Spleen (tissue), 13 donors: ENCODE measurements at regions of chr7 and their contacts with region 1.

Region 1: GRCh38 chr7:44240983-44241510 is 40.3 kb downstream of the YKT6 start:
- DNase-seq: peak; percentile 84
- H3K4me3 ChIP-seq: peak overlapping the region in 1 of 8 donors; percentile 50
- H3K27ac ChIP-seq: no peak overlapping the region
- H3K4me1 ChIP-seq: peaks cover 0 to 11% (median 7%) of the 10 kb centered on the region in 6 donors
- H3K27me3 ChIP-seq: peaks cover 0 to 14% (median 0%) of the 10 kb centered on the region in 7 donors
- CTCF ChIP-seq: peak; percentile 37 to 82 (median 70)
- POLR2A ChIP-seq: no peak

Region 2: DNA sequence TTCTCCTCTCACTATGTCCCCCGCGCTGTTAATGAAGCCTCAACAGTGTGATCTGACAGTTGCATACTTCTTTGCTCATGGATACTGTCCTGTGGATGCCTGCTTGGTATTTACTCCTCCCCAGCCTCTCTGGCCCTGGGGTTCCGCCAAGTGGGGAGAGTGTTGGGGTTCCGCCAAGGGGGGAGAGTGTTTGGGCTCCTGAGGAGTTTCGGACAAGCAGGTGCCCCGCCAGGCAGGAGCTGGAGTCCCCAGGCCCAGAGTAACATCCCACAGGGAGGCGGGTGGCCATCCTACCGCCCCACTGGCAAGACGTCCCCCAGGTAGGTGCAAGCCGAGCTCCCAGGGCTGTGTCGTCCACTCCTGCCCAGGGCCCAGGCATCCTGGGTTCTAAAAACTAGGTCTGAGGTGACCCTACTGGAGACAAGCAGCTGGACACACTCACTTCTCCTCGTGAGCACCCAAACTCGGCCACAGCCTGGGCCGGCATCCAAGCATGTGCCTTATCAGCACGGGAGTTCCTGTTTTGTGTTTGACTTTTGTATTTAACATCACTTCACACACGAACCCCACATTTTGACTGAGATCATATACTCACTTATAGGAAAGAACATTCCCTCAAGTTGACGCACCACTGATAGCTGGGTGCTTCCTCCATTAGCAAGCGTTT is 50.2 kb after region 1 on chr7:
- intact Hi-C with region 1: no loop called
- DNase-seq: peak; percentile 81
- H3K4me3 ChIP-seq: no peak overlapping the region
- H3K27ac ChIP-seq: no peak overlapping the region
- H3K4me1 ChIP-seq: no peaks in the 10 kb centered on the region
- H3K27me3 ChIP-seq: peaks cover 0 to 30% (median 0%) of the 10 kb centered on the region in 7 donors
- CTCF ChIP-seq: no peak
- POLR2A ChIP-seq: no peak

Region 3: GRCh38 chr7:44477063-44477830 is 236.2 kb after region 1 on chr7:
- intact Hi-C with region 1: loop called (anchors 5 kb)
- DNase-seq: no peak
- H3K4me3 ChIP-seq: no peak overlapping the region
- H3K27ac ChIP-seq: no peak overlapping the region
- H3K4me1 ChIP-seq: peaks cover 0 to 44% (median 14%) of the 10 kb centered on the region in 6 donors
- H3K27me3 ChIP-seq: no peaks in the 10 kb centered on the region
- CTCF ChIP-seq: peak; percentile 70 to 91 (median 88)
- POLR2A ChIP-seq: no peak

Region 4: GRCh38 chr7:44565097-44565794 is 324.2 kb after region 1 on chr7:
- intact Hi-C with region 1: loop called (anchors 10 kb)
- DNase-seq: peak; percentile 92
- H3K4me3 ChIP-seq: no peak overlapping the region
- H3K27ac ChIP-seq: peak overlapping the region in 2 of 8 donors; percentile 33 to 57
- H3K4me1 ChIP-seq: peaks cover 0 to 25% (median 9%) of the 10 kb centered on the region in 6 donors
- H3K27me3 ChIP-seq: no peaks in the 10 kb centered on the region
- CTCF ChIP-seq: peak; percentile 84 to 99 (median 97)
- POLR2A ChIP-seq: no peak